ENCODE measurements at regions of chr22 and their contacts with region 1.

Region 1: GRCh38 chr22:29175312-29175835 is 30.3 kb upstream of the EMID1 start:
- DNase-seq: no peak
- H3K4me3 ChIP-seq: no peak overlapping the region
- H3K27ac ChIP-seq: no peak overlapping the region
- H3K27me3 ChIP-seq: peaks cover 7% of the 10 kb centered on the region
- CTCF ChIP-seq: no peak

Region 2: DNA sequence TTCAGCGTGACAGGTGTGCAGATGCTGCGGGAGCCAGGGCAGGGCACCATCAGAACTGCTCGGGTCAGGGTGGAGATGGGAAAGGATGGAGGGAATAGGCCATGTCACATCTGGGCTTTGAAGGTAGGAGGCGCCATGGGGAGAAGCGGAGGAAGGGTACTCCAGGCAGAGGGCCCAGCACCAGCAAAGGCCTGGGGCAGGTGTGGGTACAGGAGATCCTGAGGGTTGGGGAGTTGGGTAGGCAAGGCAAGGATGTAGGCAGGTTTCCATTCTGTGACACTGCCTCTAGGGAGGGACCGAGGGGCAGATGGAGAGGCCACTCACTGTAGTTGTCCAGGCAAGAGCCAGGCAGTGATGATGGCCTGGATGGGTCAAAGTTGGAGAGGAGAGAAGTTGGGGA is 38.9 kb after region 1 on chr22:
- CTCF ChIA-PET with region 1: interaction called, 11 read pairs
- POLR2A ChIA-PET with region 1: no interaction called
- DNase-seq: no peak
- H3K4me3 ChIP-seq: no peak overlapping the region
- H3K27ac ChIP-seq: no peak overlapping the region
- H3K27me3 ChIP-seq: peaks cover 18% of the 10 kb centered on the region
- CTCF ChIP-seq: no peak

Measured in AG04450 (cell line).